ENCODE measurements at regions of chr1 and their contacts with region 1.

Region 1: DNA sequence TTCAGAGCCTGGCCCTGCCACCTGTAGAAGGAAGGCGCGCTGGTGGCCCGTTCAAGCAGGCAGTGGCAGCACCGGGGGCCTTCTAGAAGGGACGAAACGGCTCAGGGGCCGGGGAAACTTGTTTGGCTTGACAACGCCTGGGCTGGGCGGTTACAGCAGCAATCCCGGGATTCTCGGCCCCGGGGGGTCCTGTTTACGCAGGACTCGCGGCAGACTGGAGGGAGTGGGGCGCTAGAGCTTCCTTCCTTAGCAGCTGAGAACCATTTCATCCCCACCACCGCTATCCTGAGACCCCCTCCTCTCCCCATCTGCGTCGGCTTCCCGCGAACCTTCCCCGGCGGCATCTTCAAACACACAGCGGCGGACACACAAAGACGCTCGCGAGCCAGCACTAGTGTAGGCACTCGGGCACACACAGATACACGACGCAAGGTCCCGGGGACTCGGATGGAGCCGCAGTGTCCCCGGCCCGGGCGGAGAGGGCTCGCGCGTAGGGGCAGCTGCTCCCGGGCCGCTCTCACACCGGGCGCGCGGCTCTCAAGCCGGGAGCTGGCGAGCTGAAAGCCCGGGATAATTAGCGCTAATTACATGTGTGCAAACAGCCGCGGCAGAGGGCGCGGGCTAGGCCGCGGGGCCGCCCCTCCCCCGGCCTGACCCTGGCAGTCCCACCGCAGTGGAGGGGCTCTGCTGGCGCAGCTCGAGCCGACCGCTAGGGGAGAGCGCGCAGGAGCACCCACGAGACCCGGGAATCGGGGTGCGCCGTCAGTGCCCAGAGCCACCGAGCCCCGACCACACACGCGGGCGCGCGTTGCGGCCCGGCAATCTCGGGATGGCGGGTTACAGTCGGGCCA is 271.4 kb downstream of the FOXD2 start:
- DNase-seq: no peak
- H3K4me3 ChIP-seq: peak overlapping the region; percentile 25 to 48
- H3K27ac ChIP-seq: no peak overlapping the region
- H3K4me1 ChIP-seq: peaks cover 15% of the 10 kb centered on the region
- H3K27me3 ChIP-seq: no peaks in the 10 kb centered on the region
- CTCF ChIP-seq: peak in 2 of 3 experiments; percentile 16 to 34
- POLR2A ChIP-seq: no peak

Region 2: GRCh38 chr1:47437447-47438164 is 271.6 kb before region 1 on chr1 and contains the start of gene FOXD2:
- intact Hi-C with region 1: loop called (anchors 5 kb)
- DNase-seq: peak; percentile 85
- H3K4me3 ChIP-seq: peak within 1 kb of the TSS; percentile 65
- H3K27ac ChIP-seq: peak within 1 kb of the TSS in 1 of 2 donors; percentile 82
- H3K4me1 ChIP-seq: peaks cover 19% of the 10 kb centered on the region
- H3K27me3 ChIP-seq: no peaks in the 10 kb centered on the region
- CTCF ChIP-seq: peak; percentile 95 to 98 (median 98)
- POLR2A ChIP-seq: no peak
- total RNA-seq, gene FOXD2: 0.99 to 1.3 TPM

Region 3: DNA sequence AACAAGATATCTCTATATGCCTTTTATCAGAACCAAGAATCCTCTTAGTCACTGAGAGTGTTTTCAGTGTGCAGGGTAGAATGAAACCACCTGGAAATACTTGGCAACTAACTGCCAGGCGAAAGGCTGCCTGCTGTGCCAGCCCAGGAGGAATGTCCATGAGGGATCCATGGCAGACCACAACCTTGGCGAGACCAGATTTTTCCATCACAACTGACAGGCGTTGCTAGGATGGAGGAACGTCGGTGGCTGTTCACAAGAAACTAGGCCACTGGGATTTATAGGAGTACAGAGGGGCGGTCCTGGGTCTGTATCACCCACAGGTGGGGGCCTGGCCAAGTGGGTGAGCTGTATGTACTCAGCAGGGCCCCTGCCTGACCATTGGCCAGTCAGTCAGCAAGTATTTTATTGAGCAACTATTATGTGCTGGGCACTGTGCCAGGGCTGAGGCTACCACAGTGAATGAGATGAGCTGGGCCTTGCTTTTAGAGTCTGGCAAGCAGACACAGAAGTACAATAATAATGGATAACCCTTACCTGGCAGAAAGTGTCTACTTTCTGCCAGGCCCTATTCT is 72.0 kb before region 1 on chr1:
- intact Hi-C with region 1: no loop called
- DNase-seq: no peak
- H3K4me3 ChIP-seq: no peak overlapping the region
- H3K27ac ChIP-seq: no peak overlapping the region
- H3K4me1 ChIP-seq: no peaks in the 10 kb centered on the region
- H3K27me3 ChIP-seq: no peaks in the 10 kb centered on the region
- CTCF ChIP-seq: no peak
- POLR2A ChIP-seq: no peak